Activated naive CD4-positive, alpha-beta T cell treated with anti-CD3 and anti-CD28 coated beads for 36 hours (primary cell): ENCODE measurements at regions of chr3 and their contacts with region 1.

Region 1: DNA sequence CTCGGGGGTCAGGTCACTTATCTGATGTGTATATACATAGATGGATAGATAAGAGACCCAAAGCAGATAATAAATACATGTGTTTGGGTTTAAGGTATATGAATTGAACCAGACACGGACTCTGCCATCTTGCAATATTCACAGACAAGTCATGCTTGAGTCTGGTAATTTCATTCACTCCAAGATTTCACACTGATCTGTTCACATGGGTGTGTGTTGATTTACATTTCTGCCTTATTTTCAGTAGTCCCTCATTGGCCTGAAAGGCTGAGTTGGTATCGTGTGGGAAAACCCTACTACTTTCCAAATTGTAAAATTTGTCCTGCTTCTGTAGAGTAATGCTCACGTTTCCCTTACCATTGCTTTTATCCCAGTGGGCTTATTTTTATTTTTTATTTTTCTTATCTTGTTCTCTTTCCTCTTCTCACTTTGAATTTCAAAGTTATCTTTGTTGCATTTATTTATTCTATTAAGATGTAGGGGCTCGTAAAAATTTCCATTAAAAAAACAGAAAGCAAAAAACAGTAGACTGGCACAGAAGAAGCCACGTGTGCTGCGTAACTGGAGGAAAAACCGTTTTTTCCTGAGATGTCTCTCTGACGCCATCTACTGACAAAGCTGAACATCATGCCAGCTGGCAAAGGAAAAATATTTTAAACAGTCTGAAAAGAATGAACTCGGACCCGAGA is 10.8 kb upstream of the MFSD1 start:
- DNase-seq: peak; percentile 48
- H3K4me3 Mint-ChIP-seq: peak overlapping the region; percentile 36
- H3K27ac Mint-ChIP-seq: no peak overlapping the region
- H3K4me1 Mint-ChIP-seq: peaks cover 5% of the 10 kb centered on the region
- H3K27me3 Mint-ChIP-seq: no peaks in the 10 kb centered on the region

Region 2: GRCh38 chr3:157606011-157606851 is 1184.8 kb before region 1 on chr3:
- CTCF ChIA-PET with region 1: no interaction called
- intact Hi-C with region 1: loop called (anchors 2 kb)
- DNase-seq: peak; percentile 77
- H3K4me3 Mint-ChIP-seq: no peak overlapping the region
- H3K27ac Mint-ChIP-seq: no peak overlapping the region
- H3K4me1 Mint-ChIP-seq: peaks cover 7% of the 10 kb centered on the region
- H3K27me3 Mint-ChIP-seq: peaks cover 5% of the 10 kb centered on the region

Region 3: DNA sequence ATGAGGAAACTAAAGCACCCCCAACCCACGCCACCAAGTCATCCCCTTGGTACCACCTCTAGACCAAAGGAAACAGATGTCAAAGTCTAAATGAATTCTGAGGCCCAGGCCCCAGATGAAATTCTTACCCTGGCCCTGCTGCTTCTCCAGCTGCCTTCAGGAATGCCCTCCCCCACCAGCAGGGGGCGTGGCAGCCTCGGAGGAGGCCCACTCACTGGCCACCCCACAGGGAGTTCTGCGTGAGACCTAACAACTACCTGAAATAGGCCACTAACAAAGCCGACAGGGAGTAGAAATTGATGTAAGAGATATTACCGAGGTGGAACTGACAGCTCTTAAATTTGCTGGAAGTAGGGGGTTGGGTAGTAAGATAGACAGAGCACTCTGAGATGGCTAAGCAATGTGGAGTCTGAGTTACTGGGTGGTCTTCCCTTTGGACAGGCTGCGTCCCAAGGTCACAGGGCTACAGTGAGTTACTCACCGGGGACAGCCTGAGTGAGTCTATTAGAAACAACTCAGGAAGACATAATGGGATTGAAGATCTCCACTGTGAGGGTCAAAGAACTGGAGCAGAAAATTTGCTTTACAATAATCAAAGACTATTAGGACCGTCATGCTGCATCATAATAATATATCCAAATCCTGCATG is 925.6 kb before region 1 on chr3:
- CTCF ChIA-PET with region 1: no interaction called
- intact Hi-C with region 1: loop called (anchors 5 kb)
- DNase-seq: peak; percentile 55
- H3K4me3 Mint-ChIP-seq: no peak overlapping the region
- H3K27ac Mint-ChIP-seq: no peak overlapping the region
- H3K4me1 Mint-ChIP-seq: no peaks in the 10 kb centered on the region
- H3K27me3 Mint-ChIP-seq: no peaks in the 10 kb centered on the region

Region 4: GRCh38 chr3:158570999-158571974 is 219.8 kb before region 1 on chr3 and contains the start of gene MLF1:
- CTCF ChIA-PET with region 1: no interaction called
- intact Hi-C with region 1: no loop called
- DNase-seq: peak; percentile 86
- H3K4me3 Mint-ChIP-seq: peak within 1 kb of the TSS; percentile 72
- H3K27ac Mint-ChIP-seq: no peak within 1 kb of the TSS
- H3K4me1 Mint-ChIP-seq: peaks cover 11% of the 10 kb centered on the region
- H3K27me3 Mint-ChIP-seq: peaks cover 40% of the 10 kb centered on the region
- total RNA-seq, gene MLF1: 1.2 to 1.6 TPM

Region 5: GRCh38 chr3:158659454-158660237 is 131.4 kb before region 1 on chr3:
- CTCF ChIA-PET with region 1: interaction called, 15 read pairs
- intact Hi-C with region 1: loop called (anchors 1 kb)
- DNase-seq: peak; percentile 74
- H3K4me3 Mint-ChIP-seq: no peak overlapping the region
- H3K27ac Mint-ChIP-seq: no peak overlapping the region
- H3K4me1 Mint-ChIP-seq: peaks cover 6% of the 10 kb centered on the region
- H3K27me3 Mint-ChIP-seq: no peaks in the 10 kb centered on the region

Region 6: DNA sequence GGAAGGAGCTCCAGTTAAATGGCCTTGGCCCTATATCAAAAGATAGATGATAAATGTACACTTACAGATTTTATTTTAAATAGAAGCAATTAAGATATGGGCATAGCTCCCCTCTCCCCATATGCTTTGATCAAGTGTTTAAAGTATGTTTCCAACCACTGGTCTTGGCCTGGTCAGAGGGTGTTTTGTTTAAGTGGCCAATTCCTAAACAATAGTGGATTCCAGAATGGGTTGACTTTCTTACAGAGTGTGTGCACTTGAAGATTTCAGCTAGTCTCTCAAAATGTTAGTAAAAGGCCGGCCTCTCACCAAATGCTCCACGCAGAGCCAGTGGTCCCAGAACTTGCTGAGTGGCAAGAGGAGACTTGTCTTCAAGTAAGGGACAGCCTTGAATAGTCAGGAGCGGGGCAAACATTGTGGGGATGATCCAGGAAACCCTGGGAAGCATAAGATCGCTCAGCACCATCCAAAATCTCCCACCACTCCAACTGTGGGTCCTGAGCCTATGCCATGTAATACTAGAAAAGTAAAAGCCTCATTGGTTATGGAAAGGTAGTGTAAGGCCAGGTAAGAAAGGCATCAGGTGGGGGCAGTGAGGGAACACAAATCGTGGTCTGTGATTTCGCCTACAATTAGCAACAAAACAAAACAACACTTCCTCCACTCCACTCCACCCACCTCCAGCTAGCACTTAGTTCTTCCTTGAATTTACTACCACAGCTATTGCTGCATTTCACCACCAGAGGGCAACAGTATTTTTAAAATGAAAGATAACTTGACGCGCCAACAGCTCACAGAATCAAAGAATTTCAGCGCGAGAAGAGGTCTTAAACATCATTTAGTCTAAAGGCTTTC is 63.6 kb before region 1 on chr3:
- CTCF ChIA-PET with region 1: interaction called, 41 read pairs
- intact Hi-C with region 1: loop called (anchors 1 kb)
- DNase-seq: peak; percentile 66
- H3K4me3 Mint-ChIP-seq: peak overlapping the region; percentile 19
- H3K27ac Mint-ChIP-seq: no peak overlapping the region
- H3K4me1 Mint-ChIP-seq: peaks cover 23% of the 10 kb centered on the region
- H3K27me3 Mint-ChIP-seq: peaks cover 2% of the 10 kb centered on the region

Region 7: GRCh38 chr3:158896729-158897128 is 105.7 kb after region 1 on chr3:
- CTCF ChIA-PET with region 1: no interaction called
- intact Hi-C with region 1: no loop called
- DNase-seq: no peak
- H3K4me3 Mint-ChIP-seq: no peak overlapping the region
- H3K27ac Mint-ChIP-seq: no peak overlapping the region
- H3K4me1 Mint-ChIP-seq: no peaks in the 10 kb centered on the region
- H3K27me3 Mint-ChIP-seq: no peaks in the 10 kb centered on the region

Region 8: DNA sequence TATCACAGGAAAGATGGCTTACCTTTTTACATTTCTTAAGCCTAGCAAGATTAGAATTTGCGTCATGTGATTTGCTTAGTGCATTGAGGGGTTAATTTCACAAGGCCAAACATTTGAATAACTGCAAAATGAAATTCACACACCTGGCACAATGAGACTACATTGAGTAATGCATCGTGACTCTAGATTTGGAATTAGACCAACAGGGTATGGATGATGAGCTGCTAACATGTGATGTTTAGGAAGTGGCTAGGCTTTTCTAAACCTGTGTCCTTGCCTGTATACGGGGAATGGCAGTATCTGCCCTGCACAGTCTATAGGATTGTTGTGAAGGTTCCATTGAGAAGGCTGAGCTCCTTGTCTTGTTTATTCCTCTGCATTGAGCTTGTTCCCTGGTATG is 170.9 kb after region 1 on chr3:
- CTCF ChIA-PET with region 1: no interaction called
- intact Hi-C with region 1: no loop called
- DNase-seq: no peak
- H3K4me3 Mint-ChIP-seq: no peak overlapping the region
- H3K27ac Mint-ChIP-seq: no peak overlapping the region
- H3K4me1 Mint-ChIP-seq: no peaks in the 10 kb centered on the region
- H3K27me3 Mint-ChIP-seq: peaks cover 2% of the 10 kb centered on the region

Region 9: GRCh38 chr3:159260049-159260662 is 469.1 kb after region 1 on chr3:
- CTCF ChIA-PET with region 1: no interaction called
- intact Hi-C with region 1: loop called (anchors 1 kb)
- DNase-seq: peak; percentile 52
- H3K4me3 Mint-ChIP-seq: no peak overlapping the region
- H3K27ac Mint-ChIP-seq: no peak overlapping the region
- H3K4me1 Mint-ChIP-seq: no peaks in the 10 kb centered on the region
- H3K27me3 Mint-ChIP-seq: peaks cover 16% of the 10 kb centered on the region